HEK293T (cell line): ENCODE measurements at regions of chr3 and their contacts with region 1.

Region 1: GRCh38 chr3:58305882-58306711 is at the starts of genes HTD2 and RPP14:
- DNase-seq: peak; percentile 98

Region 2: GRCh38 chr3:58177747-58178527 is 128.2 kb before region 1 on chr3:
- CTCF ChIA-PET with region 1: interaction called, 14 read pairs
- POLR2A ChIA-PET with region 1: interaction called, 13 read pairs
- DNase-seq: peak; percentile 90

Region 3: GRCh38 chr3:58188173-58188564 is 117.9 kb before region 1 on chr3:
- CTCF ChIA-PET with region 1: interaction called, 21 read pairs
- POLR2A ChIA-PET with region 1: interaction called, 16 read pairs
- DNase-seq: no peak

Region 4: GRCh38 chr3:58317811-58318210 is 11.7 kb after region 1 on chr3:
- CTCF ChIA-PET with region 1: interaction called, 5 read pairs
- POLR2A ChIA-PET with region 1: interaction called, 18 read pairs
- DNase-seq: no peak

Region 5: GRCh38 chr3:58375254-58375653 is 69.2 kb after region 1 on chr3:
- CTCF ChIA-PET with region 1: no interaction called
- POLR2A ChIA-PET with region 1: no interaction called
- DNase-seq: no peak

Region 6: GRCh38 chr3:58491506-58492402 is 185.7 kb after region 1 on chr3 and contains the start of gene KCTD6:
- CTCF ChIA-PET with region 1: interaction called, 10 read pairs
- POLR2A ChIA-PET with region 1: interaction called, 5 read pairs
- DNase-seq: peak; percentile 97